ENCODE measurements at regions of chr2 and their contacts with region 1.

Region 1: DNA sequence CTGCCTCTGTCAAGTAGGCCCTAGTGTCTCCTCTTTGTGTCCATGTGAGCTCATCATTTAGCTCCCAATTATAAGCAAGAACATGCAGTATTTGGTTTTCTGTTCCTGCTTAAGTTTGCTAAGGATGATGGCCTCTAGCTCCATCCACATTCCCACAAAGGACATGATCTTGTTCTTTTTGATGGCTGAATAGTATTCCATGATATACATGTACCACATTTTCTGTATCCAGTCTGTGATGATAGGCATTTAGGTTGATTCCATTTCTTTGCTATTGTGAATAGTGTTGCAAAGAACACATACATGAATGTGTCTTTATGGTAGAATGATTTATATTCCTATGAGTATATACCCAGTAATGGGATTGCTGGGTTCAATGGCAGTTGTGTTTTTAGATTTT is 263.2 kb downstream of the PARD3B start:
- DNase-seq: no peak
- H3K4me3 ChIP-seq: no peak overlapping the region
- H3K27ac ChIP-seq: no peak overlapping the region
- H3K4me1 ChIP-seq: no peaks in the 10 kb centered on the region
- H3K27me3 ChIP-seq: no peaks in the 10 kb centered on the region
- CTCF ChIP-seq: no peak
- POLR2A ChIP-seq: no peak

Region 2: DNA sequence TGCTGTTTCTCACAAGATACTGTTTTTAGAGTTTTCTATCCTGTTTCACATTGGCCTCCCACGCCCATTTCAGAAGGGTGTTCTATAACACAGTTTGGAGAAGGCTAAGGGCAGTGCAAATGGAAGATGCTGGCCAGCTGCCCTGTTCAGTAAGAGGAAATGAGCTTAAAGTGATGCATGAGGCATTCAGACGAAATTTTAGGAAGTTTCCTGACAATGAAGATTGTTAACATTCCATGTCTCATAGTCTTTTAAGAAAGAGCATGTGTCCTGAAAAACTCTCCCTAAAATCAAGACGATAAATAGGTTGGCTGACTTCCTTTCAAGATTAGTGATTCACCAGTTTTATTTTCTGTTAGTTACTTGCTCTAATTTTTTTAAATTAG is 389.6 kb after region 1 on chr2:
- intact Hi-C with region 1: loop called (anchors 5 kb)
- DNase-seq: no peak
- H3K4me3 ChIP-seq: no peak overlapping the region
- H3K27ac ChIP-seq: no peak overlapping the region
- H3K4me1 ChIP-seq: no peaks in the 10 kb centered on the region
- H3K27me3 ChIP-seq: no peaks in the 10 kb centered on the region
- CTCF ChIP-seq: no peak
- POLR2A ChIP-seq: no peak